ENCODE measurements at regions of chr5 and their contacts with region 1.

Region 1: GRCh38 chr5:16539169-16539721 is 73.6 kb upstream of the ZNF622 start:
- DNase-seq: peak; percentile 63 to 74
- H3K4me3 ChIP-seq: no peak overlapping the region
- H3K27ac ChIP-seq: peak overlapping the region; percentile 70 to 76 (median 74)
- H3K4me1 ChIP-seq: peaks cover 10 to 14% of the 10 kb centered on the region in 2 donors
- H3K27me3 ChIP-seq: no peaks in the 10 kb centered on the region
- CTCF ChIP-seq: no peak
- POLR2A ChIP-seq: no peak

Region 2: GRCh38 chr5:16492391-16493175 is 46.7 kb before region 1 on chr5:
- intact Hi-C with region 1: loop called (anchors 5 kb)
- DNase-seq: peak in 1 of 2 donors; percentile 11
- H3K4me3 ChIP-seq: no peak overlapping the region
- H3K27ac ChIP-seq: no peak overlapping the region
- H3K4me1 ChIP-seq: peaks cover 0 to 9% of the 10 kb centered on the region in 2 donors
- H3K27me3 ChIP-seq: no peaks in the 10 kb centered on the region
- CTCF ChIP-seq: no peak
- POLR2A ChIP-seq: no peak

Region 3: DNA sequence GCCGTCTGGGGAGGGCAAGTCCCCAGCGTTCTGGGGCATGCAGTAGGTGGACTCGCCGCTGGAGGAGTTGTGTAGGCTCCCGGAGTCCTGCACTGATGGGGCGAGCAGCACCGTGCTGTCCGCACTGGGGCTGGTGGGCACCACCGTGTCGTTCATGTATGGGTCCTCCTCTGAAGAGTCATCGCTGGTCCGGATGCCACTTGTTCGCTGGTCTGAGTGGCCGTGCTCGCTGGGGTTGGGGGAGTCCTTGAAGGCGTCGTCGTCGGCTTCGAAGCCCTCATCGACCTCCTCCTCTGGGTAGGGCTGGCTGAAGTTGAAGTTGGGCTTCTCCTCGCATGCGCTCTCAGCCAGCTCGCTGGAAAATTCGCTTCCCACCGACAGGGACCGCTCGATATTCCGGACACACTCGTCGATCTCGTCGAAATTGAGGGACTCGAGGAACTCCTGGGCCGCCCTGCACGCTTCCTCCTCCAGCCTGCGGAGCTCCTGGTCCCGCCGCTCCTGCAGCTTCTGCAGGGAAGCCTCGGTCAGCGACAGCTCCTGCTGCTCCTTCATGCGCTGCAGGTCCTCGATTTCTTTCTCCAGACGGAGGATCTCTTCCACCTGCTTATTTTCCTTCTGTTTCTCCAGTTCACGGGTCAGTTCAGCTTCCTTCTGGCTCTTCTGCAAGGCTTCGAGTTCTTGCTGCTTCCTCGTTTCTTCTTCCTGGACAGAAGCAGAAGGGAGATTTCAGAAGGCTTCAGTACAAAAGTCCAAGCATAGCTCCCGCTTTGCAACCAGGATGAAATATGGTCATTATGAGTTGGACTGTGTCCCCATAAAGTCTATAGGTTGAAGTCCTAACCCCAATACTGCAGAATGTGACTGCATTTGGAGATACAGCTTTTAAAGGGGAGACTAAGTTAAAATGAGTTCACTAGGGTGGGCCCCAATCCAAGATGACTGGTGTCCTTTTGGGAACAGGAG is 162.2 kb after region 1 on chr5:
- intact Hi-C with region 1: no loop called
- DNase-seq: no peak
- H3K4me3 ChIP-seq: no peak overlapping the region
- H3K27ac ChIP-seq: no peak overlapping the region
- H3K4me1 ChIP-seq: peaks cover 0 to under 1% of the 10 kb centered on the region in 2 donors
- H3K27me3 ChIP-seq: no peaks in the 10 kb centered on the region
- CTCF ChIP-seq: no peak
- POLR2A ChIP-seq: no peak

Region 4: GRCh38 chr5:16805486-16805885 is 266.2 kb after region 1 on chr5:
- intact Hi-C with region 1: no loop called
- DNase-seq: no peak
- H3K4me3 ChIP-seq: no peak overlapping the region
- H3K27ac ChIP-seq: no peak overlapping the region
- H3K4me1 ChIP-seq: peaks cover 18 to 26% of the 10 kb centered on the region in 2 donors
- H3K27me3 ChIP-seq: no peaks in the 10 kb centered on the region
- CTCF ChIP-seq: no peak
- POLR2A ChIP-seq: no peak